ENCODE measurements at regions of chr4 and their contacts with region 1.

Region 1: DNA sequence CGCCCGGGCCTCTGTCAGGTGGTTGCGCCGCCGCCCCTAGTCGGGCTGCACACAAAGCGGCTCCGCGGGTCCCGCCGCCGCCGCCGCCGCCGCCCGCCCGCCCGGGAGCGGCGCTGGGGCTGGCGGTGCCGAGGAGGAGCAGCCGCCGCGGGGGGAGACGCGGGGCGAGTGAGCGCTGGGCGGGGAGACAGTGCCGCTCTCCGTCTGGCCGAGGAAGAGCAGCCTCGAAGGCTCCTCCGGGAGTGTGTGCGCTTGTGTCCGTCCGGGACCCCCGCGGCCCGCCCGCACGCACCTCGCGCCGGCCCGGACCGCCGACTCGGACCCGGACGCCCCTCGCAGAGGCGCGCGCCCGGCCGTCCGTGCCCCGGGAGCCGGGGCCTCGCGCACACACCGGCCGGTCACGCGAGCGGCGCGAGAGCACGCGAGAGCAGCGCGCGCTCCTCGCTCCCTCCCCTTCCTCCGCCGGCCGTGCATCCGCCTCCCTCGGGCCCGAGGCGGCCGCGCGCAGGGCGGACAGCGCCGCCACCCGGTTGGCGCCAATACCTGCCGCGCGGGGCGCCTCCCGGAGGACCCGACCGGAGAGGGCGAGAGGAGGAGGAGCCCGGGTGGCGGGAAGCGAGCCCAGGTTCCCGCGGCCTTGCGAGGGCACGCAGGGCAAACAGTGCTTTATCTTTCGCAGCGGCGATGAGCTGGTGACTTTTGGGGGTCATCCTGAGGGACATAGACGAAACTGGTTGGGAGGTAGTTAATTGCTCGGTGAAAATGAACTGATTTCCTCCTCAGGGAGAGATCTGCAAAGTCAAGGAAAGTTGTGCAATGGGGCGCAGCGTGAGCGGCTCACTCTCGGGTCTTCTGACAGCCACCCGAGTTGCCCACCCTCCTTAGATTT is at the start of gene PDS5A:
- DNase-seq: peak; percentile 78 to 88
- H3K4me3 ChIP-seq: peak within 1 kb of the TSS; percentile 94 to 96
- H3K27ac ChIP-seq: peak within 1 kb of the TSS; percentile 98
- H3K4me1 ChIP-seq: no peaks in the 10 kb centered on the region
- H3K27me3 ChIP-seq: no peaks in the 10 kb centered on the region
- CTCF ChIP-seq: peak; percentile 71 to 98 (median 90)
- POLR2A ChIP-seq: peak; percentile 38 to 71
- total RNA-seq, gene PDS5A: 42.9 to 107 (median 68.9) TPM

Region 2: DNA sequence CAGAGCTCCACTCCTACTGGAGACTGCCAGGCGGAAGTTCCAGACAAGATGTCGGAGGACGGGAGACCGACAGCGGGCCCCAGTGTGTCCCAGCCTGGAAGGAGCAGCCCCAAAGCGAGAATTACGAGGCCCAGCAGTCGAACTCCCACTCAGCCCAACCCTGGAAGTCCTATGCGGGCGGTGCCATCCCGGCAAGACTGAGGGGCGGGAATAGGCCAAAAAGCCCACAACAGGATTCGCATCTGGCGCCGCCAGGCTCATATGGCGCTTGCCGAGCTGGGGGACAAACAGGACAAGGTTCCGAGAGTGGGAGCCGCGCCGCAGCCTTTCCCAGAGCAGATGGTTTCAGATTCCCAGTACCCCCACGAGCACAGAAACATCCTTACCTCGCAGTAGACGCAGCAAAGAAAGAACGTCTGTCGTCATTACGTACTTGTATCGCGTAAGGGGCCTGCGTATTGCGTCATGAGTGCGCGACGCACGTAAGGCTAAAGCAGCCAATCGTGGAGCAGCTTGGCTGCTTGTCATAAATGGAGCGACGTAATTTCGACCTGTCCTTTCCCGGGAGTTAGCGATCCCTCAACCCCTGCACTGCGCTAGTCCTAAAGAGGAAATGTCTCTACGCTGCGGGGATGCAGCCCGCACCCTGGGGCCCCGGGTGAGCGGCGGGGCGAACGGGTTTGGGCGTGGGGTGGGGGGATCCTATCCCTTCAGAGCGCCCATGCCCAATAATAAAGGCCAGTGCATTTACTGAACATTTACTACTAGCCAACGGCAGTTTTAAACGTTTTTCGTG is 519.0 kb before region 1 on chr4 and contains the starts of genes LIAS and RPL9:
- intact Hi-C with region 1: loop called (anchors 5 kb)
- DNase-seq: peak; percentile 96 to 98
- H3K4me3 ChIP-seq: peak within 1 kb of the TSS; percentile 63 to 68
- H3K27ac ChIP-seq: peak within 1 kb of the TSS; percentile 90 to 94
- H3K4me1 ChIP-seq: peaks cover 3 to 18% of the 10 kb centered on the region in 2 donors
- H3K27me3 ChIP-seq: no peaks in the 10 kb centered on the region
- CTCF ChIP-seq: peak in 1 of 4 experiments; percentile 31
- POLR2A ChIP-seq: peak; percentile 88 to 96
- total RNA-seq, gene LIAS: 1.8 to 16.5 (median 11.3) TPM
- total RNA-seq, gene RPL9: 3,607 to 16,295 (median 4,795) TPM

Region 3: GRCh38 chr4:39469429-39470077 is 508.2 kb before region 1 on chr4:
- intact Hi-C with region 1: loop called (anchors 5 kb)
- DNase-seq: peak in 1 of 2 donors; percentile 29
- H3K4me3 ChIP-seq: no peak overlapping the region
- H3K27ac ChIP-seq: peak overlapping the region; percentile 56 to 71
- H3K4me1 ChIP-seq: no peaks in the 10 kb centered on the region
- H3K27me3 ChIP-seq: no peaks in the 10 kb centered on the region
- CTCF ChIP-seq: peak; percentile 70 to 83 (median 80)
- POLR2A ChIP-seq: no peak

Region 4: DNA sequence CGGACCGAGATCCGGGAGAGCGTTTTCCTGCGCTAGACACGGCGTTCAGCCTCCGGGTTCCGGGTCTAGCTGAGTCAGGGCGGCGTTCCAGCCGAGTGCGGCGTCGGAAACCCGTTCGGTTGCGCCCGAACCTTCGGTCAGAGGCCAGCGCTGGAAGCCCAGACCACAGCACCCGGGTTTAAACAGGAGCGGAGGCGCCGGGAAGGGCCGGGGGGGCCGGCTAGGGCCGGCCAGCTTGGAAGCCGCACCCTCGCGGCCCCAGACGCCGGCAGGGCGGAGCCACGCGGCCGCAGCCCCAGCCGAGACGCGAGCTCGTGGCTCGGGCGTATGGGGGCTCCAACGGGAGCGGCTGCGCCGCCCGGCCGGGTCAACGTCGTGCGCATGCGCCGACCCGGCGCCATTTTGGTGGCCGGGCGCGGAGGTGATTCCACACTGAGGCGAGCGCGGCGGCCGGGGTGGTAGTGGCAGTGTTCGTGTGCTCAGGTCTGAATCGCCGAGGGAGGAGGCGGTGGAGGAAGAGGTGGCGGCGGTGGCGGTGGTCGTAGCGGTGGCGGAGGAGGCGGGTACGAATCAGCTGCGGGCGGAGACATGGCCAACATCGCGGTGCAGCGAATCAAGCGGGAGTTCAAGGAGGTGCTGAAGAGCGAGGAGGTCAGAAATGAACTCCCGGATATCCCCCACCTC is 279.9 kb before region 1 on chr4 and contains the start of gene UBE2K:
- intact Hi-C with region 1: loop called (anchors 2 kb)
- DNase-seq: peak; percentile 79 to 91
- H3K4me3 ChIP-seq: peak within 1 kb of the TSS; percentile 61 to 95
- H3K27ac ChIP-seq: peak within 1 kb of the TSS; percentile 92 to 95
- H3K4me1 ChIP-seq: peaks cover 0 to 6% of the 10 kb centered on the region in 2 donors
- H3K27me3 ChIP-seq: no peaks in the 10 kb centered on the region
- CTCF ChIP-seq: peak in 2 of 4 experiments; percentile 2 to 29
- POLR2A ChIP-seq: peak; percentile 61 to 85
- total RNA-seq, gene UBE2K: 38.8 to 142 (median 61.5) TPM

Region 5: GRCh38 chr4:39713691-39714090 is 264.0 kb before region 1 on chr4:
- intact Hi-C with region 1: no loop called
- DNase-seq: no peak
- H3K4me3 ChIP-seq: no peak overlapping the region
- H3K27ac ChIP-seq: no peak overlapping the region
- H3K4me1 ChIP-seq: peaks cover 0 to 7% of the 10 kb centered on the region in 2 donors
- H3K27me3 ChIP-seq: no peaks in the 10 kb centered on the region
- CTCF ChIP-seq: no peak
- POLR2A ChIP-seq: no peak

Region 6: GRCh38 chr4:40086421-40086820 is 108.7 kb after region 1 on chr4:
- intact Hi-C with region 1: no loop called
- DNase-seq: no peak
- H3K4me3 ChIP-seq: no peak overlapping the region
- H3K27ac ChIP-seq: no peak overlapping the region
- H3K4me1 ChIP-seq: no peaks in the 10 kb centered on the region
- H3K27me3 ChIP-seq: no peaks in the 10 kb centered on the region
- CTCF ChIP-seq: no peak
- POLR2A ChIP-seq: no peak